ENCODE measurements at regions of chr1 and their contacts with region 1.

Region 1: GRCh38 chr1:33633019-33633801 is 160.8 kb downstream of the ZSCAN20 start:
- DNase-seq: peak; percentile 83 to 99 (median 96)

Region 2: DNA sequence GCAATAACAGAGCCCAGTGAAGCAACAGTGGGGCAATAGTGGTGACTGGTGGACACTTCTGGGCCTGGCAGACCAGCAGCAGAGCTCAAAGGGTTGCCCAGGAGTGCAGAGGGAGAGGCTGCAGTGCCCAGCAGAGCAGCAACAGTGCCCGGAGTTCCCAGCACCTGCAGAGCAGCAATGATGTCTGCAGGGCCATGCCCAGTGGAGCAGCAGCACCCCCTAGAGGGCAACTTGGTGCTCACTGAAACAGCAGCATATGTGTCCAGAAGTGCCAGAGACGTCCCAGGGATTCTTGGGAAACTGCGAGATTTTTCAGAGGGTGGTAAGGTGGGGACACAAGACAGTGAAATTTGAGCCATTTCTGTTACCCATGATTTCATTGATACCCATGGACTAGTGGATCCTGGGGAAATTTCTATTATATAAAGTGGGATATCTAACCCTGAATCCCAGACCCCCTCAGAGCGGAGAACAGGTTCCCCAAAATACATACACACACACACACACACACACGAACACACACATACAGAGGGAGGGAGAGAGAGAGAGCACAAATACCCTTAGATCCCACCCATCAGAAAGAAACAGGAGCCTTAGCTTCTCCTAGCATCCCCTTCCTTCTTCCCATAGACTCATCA is 964.8 kb after region 1 on chr1:
- intact Hi-C with region 1: loop called (anchors 2 kb)
- DNase-seq: peak; percentile 78 to 98 (median 90)

Measured in posterior cingulate gyrus (tissue), 11 donors.